Endothelial cell of umbilical vein (primary cell): ENCODE measurements at regions of chr3 and their contacts with region 1.

Region 1: DNA sequence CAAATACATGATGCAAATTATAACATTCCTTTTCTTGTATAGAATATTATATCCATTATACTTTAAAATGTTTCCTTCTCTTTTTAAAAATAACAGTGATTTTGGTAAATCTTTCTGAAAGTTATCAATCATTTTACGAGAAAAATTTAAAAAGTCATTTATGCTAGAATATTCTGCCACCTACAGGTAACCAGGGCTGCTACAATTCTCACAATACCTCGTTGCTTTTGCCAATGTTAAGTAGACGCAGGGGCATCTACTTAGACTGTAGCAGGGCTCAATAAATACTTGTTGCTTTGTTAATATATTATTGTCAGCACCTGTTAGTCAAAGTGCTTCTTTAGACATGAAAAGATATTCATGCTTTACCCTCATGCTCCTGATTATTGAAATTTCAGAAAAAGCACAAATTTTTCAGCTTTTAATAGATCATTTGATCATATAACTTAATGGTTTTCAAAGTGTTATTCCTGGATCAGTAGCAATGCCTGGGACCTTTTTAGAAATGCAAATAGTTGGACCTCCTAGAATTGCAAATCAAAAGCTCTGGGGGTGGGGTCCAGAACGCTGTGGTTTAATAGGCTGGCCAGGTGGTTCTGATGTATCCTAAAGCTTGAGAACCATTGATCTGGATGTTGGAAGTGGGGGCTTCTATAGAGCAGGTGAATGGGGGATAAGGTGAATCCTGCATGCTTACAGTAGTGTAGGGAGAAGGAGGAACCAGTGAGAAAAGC is 223.6 kb upstream of the PDZRN3 start:
- DNase-seq: no peak
- H3K4me3 ChIP-seq: no peak overlapping the region
- H3K27ac ChIP-seq: no peak overlapping the region
- H3K4me1 ChIP-seq: no peaks in the 10 kb centered on the region
- H3K27me3 ChIP-seq: no peaks in the 10 kb centered on the region
- CTCF ChIP-seq: peak in 1 of 2 donors; percentile 21
- POLR2A ChIP-seq: no peak

Region 2: DNA sequence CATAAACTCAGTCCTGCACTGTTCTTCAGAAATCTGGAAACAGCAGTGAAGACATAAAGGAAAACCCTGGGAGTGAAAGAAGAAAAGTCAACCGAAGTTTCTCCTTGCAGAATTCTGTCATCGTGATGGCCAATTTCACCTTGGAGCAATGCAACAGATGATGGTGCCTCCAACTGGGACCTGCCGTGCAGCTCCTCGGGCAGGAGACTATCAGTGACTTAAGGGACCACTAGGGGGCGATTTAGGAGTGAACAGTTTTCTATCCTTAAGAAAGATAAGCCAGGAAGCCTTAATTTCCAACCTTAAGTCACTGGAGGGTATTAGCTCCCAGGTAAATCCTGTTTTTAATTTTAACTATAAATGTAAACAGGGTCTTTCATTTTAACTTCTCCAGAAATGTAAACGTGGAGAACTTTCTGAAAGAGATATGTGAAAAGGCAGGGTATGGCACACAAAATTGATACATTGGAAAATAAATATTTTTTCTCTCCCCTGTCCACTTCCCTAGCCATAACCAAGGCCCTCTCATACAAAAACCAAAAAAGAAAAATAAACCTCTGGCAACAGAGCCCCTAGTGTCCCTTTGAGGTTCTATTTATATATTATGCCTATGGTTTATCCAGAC is 339.9 kb before region 1 on chr3:
- CTCF ChIA-PET with region 1: no interaction called
- POLR2A ChIA-PET with region 1: no interaction called
- dilution Hi-C with region 1: no loop called
- intact Hi-C with region 1: loop called (anchors 1 kb)
- DNase-seq: peak; percentile 43
- H3K4me3 ChIP-seq: no peak overlapping the region
- H3K27ac ChIP-seq: no peak overlapping the region
- H3K4me1 ChIP-seq: no peaks in the 10 kb centered on the region
- H3K27me3 ChIP-seq: no peaks in the 10 kb centered on the region
- CTCF ChIP-seq: peak; percentile 63 to 69
- POLR2A ChIP-seq: no peak

Region 3: GRCh38 chr3:73766599-73767381 is 81.5 kb before region 1 on chr3:
- CTCF ChIA-PET with region 1: no interaction called
- POLR2A ChIA-PET with region 1: no interaction called
- dilution Hi-C with region 1: no loop called
- intact Hi-C with region 1: no loop called
- DNase-seq: no peak
- H3K4me3 ChIP-seq: no peak overlapping the region
- H3K27ac ChIP-seq: no peak overlapping the region
- H3K4me1 ChIP-seq: no peaks in the 10 kb centered on the region
- H3K27me3 ChIP-seq: no peaks in the 10 kb centered on the region
- CTCF ChIP-seq: no peak
- POLR2A ChIP-seq: no peak

Region 4: GRCh38 chr3:73827725-73828211 is 20.6 kb before region 1 on chr3:
- CTCF ChIA-PET with region 1: no interaction called
- POLR2A ChIA-PET with region 1: no interaction called
- dilution Hi-C with region 1: no loop called
- intact Hi-C with region 1: no loop called
- DNase-seq: no peak
- H3K4me3 ChIP-seq: no peak overlapping the region
- H3K27ac ChIP-seq: no peak overlapping the region
- H3K4me1 ChIP-seq: no peaks in the 10 kb centered on the region
- H3K27me3 ChIP-seq: no peaks in the 10 kb centered on the region
- CTCF ChIP-seq: no peak
- POLR2A ChIP-seq: no peak